ENCODE measurements at regions of chr4 and their contacts with region 1.

Region 1: GRCh38 chr4:121726642-121727268 is 30.0 kb upstream of the ANXA5 start:
- DNase-seq: peak; percentile 55
- ATAC-seq: peak; percentile 76
- H3K4me3 ChIP-seq: no peak overlapping the region
- H3K4me3 Mint-ChIP-seq: no peak overlapping the region
- H3K27ac ChIP-seq: no peak overlapping the region
- H3K27ac Mint-ChIP-seq: no peak overlapping the region
- H3K4me1 ChIP-seq: no peaks in the 10 kb centered on the region
- H3K4me1 Mint-ChIP-seq: no peaks in the 10 kb centered on the region
- H3K27me3 ChIP-seq: peaks cover 0 to 3% (median 0%) of the 10 kb centered on the region in 4 experiments
- H3K27me3 Mint-ChIP-seq: peaks cover 30% of the 10 kb centered on the region
- CTCF ChIP-seq: peak; percentile 74

Region 2: DNA sequence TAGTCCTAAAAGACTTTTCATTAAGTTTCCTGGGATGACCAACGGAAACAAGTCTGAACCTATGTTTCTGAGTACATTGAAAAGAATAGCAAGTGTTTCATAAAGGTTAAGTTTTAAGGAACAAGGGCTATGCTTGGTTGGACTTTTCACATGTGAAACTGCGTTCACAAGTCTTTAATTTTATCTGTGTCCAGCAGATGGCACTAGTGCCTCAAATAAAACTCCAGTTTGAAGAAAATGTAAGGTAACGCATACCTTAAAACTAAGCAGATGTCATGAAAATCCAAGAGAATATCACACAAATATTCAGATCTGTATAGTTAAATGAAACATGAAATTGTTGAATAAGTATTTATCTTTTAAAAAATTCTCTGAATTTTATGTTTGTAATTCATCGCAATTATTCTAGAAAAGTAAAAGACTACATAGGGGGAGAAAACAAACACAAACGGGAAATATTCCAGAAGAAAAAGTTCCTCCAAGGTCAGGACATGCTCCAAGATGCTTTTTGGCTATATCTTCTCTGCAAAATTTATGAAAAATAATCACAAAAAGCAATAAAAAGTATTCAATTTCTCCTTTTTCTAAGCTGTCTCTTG is 1570.5 kb before region 1 on chr4:
- CTCF ChIA-PET with region 1: no interaction called
- POLR2A ChIA-PET with region 1: no interaction called
- intact Hi-C with region 1: loop called (anchors 5 kb)
- DNase-seq: peak; percentile 62
- ATAC-seq: no peak
- H3K4me3 ChIP-seq: no peak overlapping the region
- H3K4me3 Mint-ChIP-seq: no peak overlapping the region
- H3K27ac ChIP-seq: no peak overlapping the region
- H3K27ac Mint-ChIP-seq: no peak overlapping the region
- H3K4me1 ChIP-seq: no peaks in the 10 kb centered on the region
- H3K4me1 Mint-ChIP-seq: no peaks in the 10 kb centered on the region
- H3K27me3 ChIP-seq: no peaks in the 10 kb centered on the region
- H3K27me3 Mint-ChIP-seq: peaks cover 10% of the 10 kb centered on the region
- CTCF ChIP-seq: peak; percentile 87

Region 3: GRCh38 chr4:121192480-121192879 is 534.3 kb before region 1 on chr4:
- CTCF ChIA-PET with region 1: no interaction called
- POLR2A ChIA-PET with region 1: no interaction called
- intact Hi-C with region 1: loop called (anchors 5 kb)
- DNase-seq: peak; percentile 28
- ATAC-seq: no peak
- H3K4me3 ChIP-seq: no peak overlapping the region
- H3K4me3 Mint-ChIP-seq: no peak overlapping the region
- H3K27ac ChIP-seq: no peak overlapping the region
- H3K27ac Mint-ChIP-seq: no peak overlapping the region
- H3K4me1 ChIP-seq: no peaks in the 10 kb centered on the region
- H3K4me1 Mint-ChIP-seq: peaks cover 1% of the 10 kb centered on the region
- H3K27me3 ChIP-seq: no peaks in the 10 kb centered on the region
- H3K27me3 Mint-ChIP-seq: no peaks in the 10 kb centered on the region
- CTCF ChIP-seq: peak; percentile 86

Region 4: GRCh38 chr4:121370729-121371325 is 355.9 kb before region 1 on chr4:
- CTCF ChIA-PET with region 1: interaction called, 13 read pairs
- POLR2A ChIA-PET with region 1: no interaction called
- intact Hi-C with region 1: no loop called
- DNase-seq: peak; percentile 24
- ATAC-seq: no peak
- H3K4me3 ChIP-seq: no peak overlapping the region
- H3K4me3 Mint-ChIP-seq: no peak overlapping the region
- H3K27ac ChIP-seq: no peak overlapping the region
- H3K27ac Mint-ChIP-seq: no peak overlapping the region
- H3K4me1 ChIP-seq: no peaks in the 10 kb centered on the region
- H3K4me1 Mint-ChIP-seq: no peaks in the 10 kb centered on the region
- H3K27me3 ChIP-seq: no peaks in the 10 kb centered on the region
- H3K27me3 Mint-ChIP-seq: peaks cover 8% of the 10 kb centered on the region
- CTCF ChIP-seq: peak; percentile 72

Region 5: GRCh38 chr4:121462660-121463261 is 264.0 kb before region 1 on chr4:
- CTCF ChIA-PET with region 1: no interaction called
- POLR2A ChIA-PET with region 1: no interaction called
- intact Hi-C with region 1: loop called (anchors 1 kb)
- DNase-seq: peak; percentile 27
- ATAC-seq: no peak
- H3K4me3 ChIP-seq: no peak overlapping the region
- H3K4me3 Mint-ChIP-seq: no peak overlapping the region
- H3K27ac ChIP-seq: no peak overlapping the region
- H3K27ac Mint-ChIP-seq: no peak overlapping the region
- H3K4me1 ChIP-seq: no peaks in the 10 kb centered on the region
- H3K4me1 Mint-ChIP-seq: no peaks in the 10 kb centered on the region
- H3K27me3 ChIP-seq: no peaks in the 10 kb centered on the region
- H3K27me3 Mint-ChIP-seq: no peaks in the 10 kb centered on the region
- CTCF ChIP-seq: peak; percentile 61

Region 6: GRCh38 chr4:121696581-121697461 is 29.9 kb before region 1 on chr4 and contains the start of gene ANXA5:
- CTCF ChIA-PET with region 1: interaction called, 5 read pairs
- POLR2A ChIA-PET with region 1: no interaction called
- intact Hi-C with region 1: loop called (anchors 2 kb)
- DNase-seq: peak; percentile 78
- ATAC-seq: peak; percentile 90
- H3K4me3 ChIP-seq: peak within 1 kb of the TSS; percentile 73 to 85 (median 79)
- H3K4me3 Mint-ChIP-seq: peak within 1 kb of the TSS; percentile 99
- H3K27ac ChIP-seq: peak within 1 kb of the TSS; percentile 39 to 69
- H3K27ac Mint-ChIP-seq: peak within 1 kb of the TSS; percentile 98
- H3K4me1 ChIP-seq: peaks cover 13 to 14% of the 10 kb centered on the region in 2 donors
- H3K4me1 Mint-ChIP-seq: peaks cover 36% of the 10 kb centered on the region
- H3K27me3 ChIP-seq: peaks cover 0 to 12% (median 0%) of the 10 kb centered on the region in 4 experiments
- H3K27me3 Mint-ChIP-seq: peaks cover 12% of the 10 kb centered on the region
- CTCF ChIP-seq: no peak
- total RNA-seq, gene ANXA5: 66.5 and 67.8 TPM in 2 replicates

Region 7: GRCh38 chr4:121842862-121843261 is 116.1 kb after region 1 on chr4:
- CTCF ChIA-PET with region 1: no interaction called
- POLR2A ChIA-PET with region 1: no interaction called
- intact Hi-C with region 1: no loop called
- DNase-seq: no peak
- ATAC-seq: no peak
- H3K4me3 ChIP-seq: no peak overlapping the region
- H3K4me3 Mint-ChIP-seq: no peak overlapping the region
- H3K27ac ChIP-seq: no peak overlapping the region
- H3K27ac Mint-ChIP-seq: no peak overlapping the region
- H3K4me1 ChIP-seq: no peaks in the 10 kb centered on the region
- H3K4me1 Mint-ChIP-seq: no peaks in the 10 kb centered on the region
- H3K27me3 ChIP-seq: no peaks in the 10 kb centered on the region
- H3K27me3 Mint-ChIP-seq: no peaks in the 10 kb centered on the region
- CTCF ChIP-seq: no peak